Left cardiac atrium (tissue), 4 donors: ENCODE measurements at regions of chr2 and their contacts with region 1.

Region 1: DNA sequence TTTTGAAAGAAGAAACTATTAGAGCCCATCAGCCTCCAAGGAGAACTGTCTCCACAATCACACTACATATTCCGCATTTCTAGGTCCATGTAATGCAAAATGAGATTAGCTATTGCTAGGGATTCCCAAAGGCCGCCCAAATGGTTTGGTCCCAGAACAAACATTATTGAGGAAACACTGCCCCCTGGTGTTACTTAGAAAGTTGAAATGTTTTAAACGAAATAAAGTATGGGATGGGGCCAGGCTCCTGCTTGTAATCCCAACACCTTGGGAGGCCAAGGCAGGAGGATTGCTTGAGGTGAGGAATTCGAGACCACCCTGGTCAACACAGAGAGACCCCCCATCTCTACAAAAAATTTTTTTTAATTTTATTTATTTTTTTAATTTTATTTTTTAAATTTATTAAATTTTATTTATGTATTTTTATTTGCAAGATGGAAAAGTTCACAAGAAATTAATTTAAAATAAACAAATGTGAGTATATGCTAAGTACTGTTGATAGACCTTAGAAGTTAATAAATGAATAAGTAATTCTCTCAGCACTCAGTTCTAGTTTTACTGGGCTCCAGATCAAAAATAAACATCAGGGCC is 5.5 kb downstream of the NHEJ1 start:
- DNase-seq: no peak
- ATAC-seq: peak; percentile 47 to 48

Region 2: GRCh38 chr2:218733171-218734021 is 421.8 kb before region 1 on chr2:
- intact Hi-C with region 1: no loop called
- DNase-seq: peak; percentile 52
- ATAC-seq: peak; percentile 64 to 73

Region 3: GRCh38 chr2:218876562-218877219 is 278.5 kb before region 1 on chr2:
- intact Hi-C with region 1: loop called in 1 of 2 experiments (anchors 10 kb)
- DNase-seq: peak; percentile 51
- ATAC-seq: peak; percentile 32 to 36

Region 4: GRCh38 chr2:218995972-218996711 is 159.0 kb before region 1 on chr2:
- intact Hi-C with region 1: loop called in 1 of 2 experiments (anchors 10 kb)
- DNase-seq: peak; percentile 92
- ATAC-seq: peak; percentile 88 to 91

Region 5: GRCh38 chr2:219029829-219030165 is 125.4 kb before region 1 on chr2:
- intact Hi-C with region 1: loop called (anchors 10 kb)
- DNase-seq: peak; percentile 81
- ATAC-seq: peak; percentile 83 to 89

Region 6: DNA sequence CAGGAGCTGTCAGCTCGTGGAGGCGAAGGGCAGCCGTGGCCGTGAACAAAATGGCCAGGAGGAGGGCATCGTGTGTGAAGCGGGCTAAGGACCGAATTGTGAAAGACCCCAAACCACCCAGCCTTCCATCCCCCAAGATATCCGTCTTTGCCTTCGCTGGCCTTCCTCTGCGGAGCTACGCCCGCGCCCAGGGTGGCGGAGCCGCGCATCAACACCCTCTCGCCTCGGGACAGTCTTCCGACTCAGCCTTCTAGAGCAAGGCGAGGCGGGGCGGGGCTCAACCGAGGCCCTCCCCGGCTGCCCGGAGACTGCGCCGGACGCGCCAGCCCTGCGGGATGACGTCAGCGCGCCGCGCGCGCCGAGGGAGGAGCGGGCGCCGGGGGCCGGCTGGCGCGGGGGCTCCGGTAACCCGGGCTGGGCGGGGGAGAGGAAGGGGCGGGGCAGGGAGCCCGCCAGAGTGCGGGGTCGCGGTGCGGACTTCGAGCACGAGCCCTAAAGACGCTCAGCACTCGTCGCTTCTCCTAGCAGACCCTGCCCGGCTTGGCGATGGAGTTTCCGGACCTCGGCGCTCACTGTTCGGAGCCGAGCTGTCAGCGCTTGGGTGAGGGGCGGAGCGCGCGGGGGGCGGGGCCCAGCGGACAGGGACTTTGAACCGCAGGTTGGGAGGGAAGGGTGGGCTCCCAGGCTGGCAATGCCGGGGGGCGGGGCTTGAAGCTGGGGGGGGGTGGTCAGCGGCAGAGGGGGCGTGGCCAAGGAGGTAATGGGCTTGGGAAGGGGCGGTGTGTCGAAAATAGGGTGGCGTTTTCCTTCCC is 51.5 kb after region 1 on chr2 and contains the start of gene ZFAND2B:
- intact Hi-C with region 1: no loop called
- DNase-seq: peak; percentile 96
- ATAC-seq: peak; percentile 98
- total RNA-seq, gene ZFAND2B: 21.2 to 26.5 TPM

Region 7: GRCh38 chr2:219418155-219418569 is 263.0 kb after region 1 on chr2 and contains the start of gene DES:
- intact Hi-C with region 1: no loop called
- DNase-seq: peak; percentile 70
- ATAC-seq: peak; percentile 68 to 78
- total RNA-seq, gene DES: 5,895 to 7,519 TPM

Region 8: GRCh38 chr2:219612577-219613286 is 457.6 kb after region 1 on chr2:
- intact Hi-C with region 1: no loop called
- DNase-seq: no peak
- ATAC-seq: no peak